ENCODE measurements at regions of chr4 and their contacts with region 1.

Region 1: GRCh38 chr4:56475917-56476316 is 8.5 kb downstream of the SRP72 start:
- DNase-seq: no peak
- H3K4me3 ChIP-seq: no peak overlapping the region
- H3K27ac ChIP-seq: no peak overlapping the region
- H3K4me1 ChIP-seq: no peaks in the 10 kb centered on the region
- H3K27me3 ChIP-seq: no peaks in the 10 kb centered on the region
- CTCF ChIP-seq: no peak
- EP300 ChIP-seq: no peak
- POLR2A ChIP-seq: no peak

Region 2: DNA sequence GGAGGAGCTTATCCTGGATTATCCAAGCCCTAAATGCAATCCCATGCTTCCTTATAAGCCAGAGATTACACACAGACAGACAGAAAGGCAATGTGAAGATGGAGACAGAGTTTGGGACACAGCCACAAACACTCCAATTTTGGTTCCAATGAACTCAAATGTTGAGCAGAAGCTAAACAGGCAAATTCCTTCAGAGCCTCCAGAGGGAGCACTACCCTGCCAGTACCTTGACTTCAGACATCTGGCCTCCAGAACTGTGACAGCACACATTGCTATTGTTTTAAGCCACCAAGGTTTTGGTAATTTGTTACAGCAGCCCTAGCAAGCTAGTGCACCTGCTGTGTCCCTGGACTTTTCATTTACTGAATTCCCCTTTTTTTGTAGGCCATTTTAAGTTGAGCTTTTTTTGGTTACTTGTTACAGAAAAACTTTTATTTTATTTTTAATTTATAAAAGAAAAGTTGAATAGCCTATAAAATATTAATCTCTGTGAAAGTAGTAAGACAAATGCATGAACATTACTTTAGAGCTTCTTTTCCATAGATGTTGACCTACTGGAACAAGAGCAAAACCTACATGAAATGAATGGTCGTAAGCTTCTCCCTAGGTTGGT is 1163.3 kb before region 1 on chr4:
- in situ Hi-C with region 1: no loop called
- intact Hi-C with region 1: no loop called
- DNase-seq: peak; percentile 33
- H3K4me3 ChIP-seq: no peak overlapping the region
- H3K27ac ChIP-seq: no peak overlapping the region
- H3K4me1 ChIP-seq: no peaks in the 10 kb centered on the region
- H3K27me3 ChIP-seq: no peaks in the 10 kb centered on the region
- CTCF ChIP-seq: peak; percentile 51 to 61 (median 53)
- EP300 ChIP-seq: no peak
- POLR2A ChIP-seq: no peak

Region 3: DNA sequence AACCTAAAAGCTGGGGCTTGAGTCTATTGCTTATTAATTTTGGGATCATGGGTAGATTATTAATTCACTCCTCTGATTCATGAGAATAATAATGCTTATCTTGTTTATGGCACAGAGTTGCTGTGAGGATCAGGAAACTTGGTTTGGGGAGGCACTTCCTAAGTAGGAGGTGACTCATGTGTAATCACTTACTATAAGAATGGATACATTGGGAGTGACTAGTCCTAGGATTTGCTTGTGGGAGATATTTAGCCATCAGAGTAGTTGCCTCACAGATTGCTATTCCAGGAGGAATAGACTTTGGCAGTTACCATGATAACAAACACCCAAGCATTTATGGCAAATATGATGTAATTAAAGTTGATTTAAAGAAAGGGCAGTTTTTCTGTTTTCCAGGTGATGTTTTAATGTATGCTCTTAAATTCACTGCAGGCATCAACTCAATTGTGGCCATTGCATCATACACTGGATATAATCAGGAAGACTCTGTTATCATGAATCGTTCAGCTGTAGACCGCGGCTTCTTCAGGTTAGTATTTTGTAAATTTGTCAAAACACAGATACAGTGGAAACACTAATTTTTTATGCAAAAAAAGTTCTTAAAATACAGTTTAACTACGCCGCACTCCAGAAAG is 544.7 kb after region 1 on chr4:
- in situ Hi-C with region 1: loop called in 1 of 4 experiments (anchors 25 kb)
- intact Hi-C with region 1: no loop called
- DNase-seq: no peak
- H3K4me3 ChIP-seq: no peak overlapping the region
- H3K27ac ChIP-seq: no peak overlapping the region
- H3K4me1 ChIP-seq: no peaks in the 10 kb centered on the region
- H3K27me3 ChIP-seq: no peaks in the 10 kb centered on the region
- CTCF ChIP-seq: no peak
- EP300 ChIP-seq: no peak
- POLR2A ChIP-seq: no peak

Measured in transverse colon (tissue), 4 donors.